WTC11 (cell line): ENCODE measurements at regions of chr15 and their contacts with region 1.

Region 1: DNA sequence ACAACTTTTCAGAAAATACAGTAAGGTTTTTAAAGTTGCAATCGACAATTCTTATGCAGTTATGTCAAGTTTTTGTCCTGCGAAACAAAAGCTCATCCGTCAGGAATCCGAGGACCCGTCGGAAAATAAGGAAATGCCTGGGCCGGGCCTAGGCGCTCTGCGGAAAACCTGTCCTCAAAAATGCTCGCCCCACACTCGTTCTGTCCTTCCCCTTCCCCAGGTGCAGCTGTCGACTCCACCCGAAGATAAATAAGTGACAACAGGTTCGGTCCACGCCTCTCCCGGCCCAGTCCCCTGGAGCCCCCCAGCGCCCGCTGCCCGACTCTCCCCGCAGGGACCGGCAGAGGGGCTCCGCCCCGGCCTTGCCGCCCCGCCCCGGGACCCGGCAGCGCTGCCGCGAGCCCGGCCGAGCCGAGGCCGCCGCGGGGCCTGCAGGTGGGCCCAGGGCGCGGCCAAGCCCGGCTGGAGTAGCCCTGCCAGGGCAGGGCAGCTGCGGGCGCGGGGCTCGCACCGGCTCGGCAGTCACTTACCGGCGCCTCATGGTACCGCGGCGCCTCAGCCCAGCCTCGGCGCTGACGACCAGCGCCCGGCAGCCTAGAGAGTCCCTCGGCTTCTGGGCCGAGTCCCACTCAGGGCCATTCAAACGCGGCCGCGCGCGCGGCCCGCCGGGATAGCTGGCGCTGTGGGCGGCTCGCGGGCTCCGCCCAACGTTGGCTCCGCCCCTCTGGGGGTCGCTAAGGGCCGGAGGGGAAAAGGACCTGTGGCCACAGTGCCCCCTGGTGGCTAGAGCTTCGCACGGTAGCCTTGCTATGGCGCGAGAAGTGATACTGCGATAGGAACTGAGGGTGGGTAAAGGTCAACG is at the start of gene KATNBL1:
- DNase-seq: peak; percentile 99
- ATAC-seq: peak; percentile 79
- H3K4me3 Mint-ChIP-seq: peak within 1 kb of the TSS; percentile 87
- H3K27ac Mint-ChIP-seq: peak within 1 kb of the TSS; percentile 83
- H3K4me1 Mint-ChIP-seq: peaks cover 40% of the 10 kb centered on the region
- H3K27me3 Mint-ChIP-seq: no peaks in the 10 kb centered on the region
- CTCF ChIP-seq: peak; percentile 89
- total RNA-seq, gene KATNBL1: 41.8 to 45.8 TPM (median 43.2 TPM) in 3 replicates

Region 2: GRCh38 chr15:34101366-34102175 is 108.1 kb before region 1 on chr15 and contains the starts of genes EMC7 and PGBD4:
- CTCF ChIA-PET with region 1: interaction called, 10 read pairs
- POLR2A ChIA-PET with region 1: interaction called, 3 read pairs
- DNase-seq: peak; percentile 99
- ATAC-seq: peak; percentile 98
- H3K4me3 Mint-ChIP-seq: peak within 1 kb of the TSS; percentile 99
- H3K27ac Mint-ChIP-seq: peak within 1 kb of the TSS; percentile 95
- H3K4me1 Mint-ChIP-seq: peaks cover 11% of the 10 kb centered on the region
- H3K27me3 Mint-ChIP-seq: no peaks in the 10 kb centered on the region
- CTCF ChIP-seq: no peak
- total RNA-seq, gene EMC7: 31.5 to 34.6 TPM (median 32.1 TPM) in 3 replicates
- total RNA-seq, gene PGBD4: 1.1 to 1.2 TPM (median 1.1 TPM) in 3 replicates

Region 3: DNA sequence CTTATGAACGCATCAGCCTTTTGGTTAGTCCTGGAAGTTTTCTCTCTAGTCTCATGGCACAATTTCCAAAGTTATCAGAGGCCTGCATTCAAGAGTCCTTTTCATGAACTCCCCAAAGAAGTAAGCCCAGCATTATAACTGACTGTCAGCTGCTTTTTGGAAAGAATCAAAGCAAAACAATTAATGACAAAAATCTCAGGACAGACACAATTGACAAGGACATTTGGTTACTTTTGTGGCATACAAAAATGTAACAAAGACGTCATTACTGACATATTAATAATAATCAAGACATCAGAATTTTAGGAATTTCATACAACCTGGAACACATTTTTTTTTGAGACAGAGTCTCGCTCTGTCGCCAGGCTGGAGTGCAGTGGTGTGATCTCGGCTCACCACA is 20.9 kb before region 1 on chr15:
- CTCF ChIA-PET with region 1: interaction called, 18 read pairs
- POLR2A ChIA-PET with region 1: interaction called, 3 read pairs
- DNase-seq: no peak
- ATAC-seq: no peak
- H3K4me3 Mint-ChIP-seq: no peak overlapping the region
- H3K27ac Mint-ChIP-seq: no peak overlapping the region
- H3K4me1 Mint-ChIP-seq: no peaks in the 10 kb centered on the region
- H3K27me3 Mint-ChIP-seq: no peaks in the 10 kb centered on the region
- CTCF ChIP-seq: no peak

Region 4: GRCh38 chr15:34223904-34224596 is 14.4 kb after region 1 on chr15:
- CTCF ChIA-PET with region 1: interaction called, 10 read pairs
- POLR2A ChIA-PET with region 1: no interaction called
- DNase-seq: no peak
- ATAC-seq: no peak
- H3K4me3 Mint-ChIP-seq: peak overlapping the region; percentile 93
- H3K27ac Mint-ChIP-seq: peak overlapping the region; percentile 99
- H3K4me1 Mint-ChIP-seq: peaks cover 22% of the 10 kb centered on the region
- H3K27me3 Mint-ChIP-seq: no peaks in the 10 kb centered on the region; the same call in 1 of the 2 replicates
- CTCF ChIP-seq: no peak